Natural killer cell (primary cell): ENCODE measurements at regions of chr7 and their contacts with region 1.

Region 1: DNA sequence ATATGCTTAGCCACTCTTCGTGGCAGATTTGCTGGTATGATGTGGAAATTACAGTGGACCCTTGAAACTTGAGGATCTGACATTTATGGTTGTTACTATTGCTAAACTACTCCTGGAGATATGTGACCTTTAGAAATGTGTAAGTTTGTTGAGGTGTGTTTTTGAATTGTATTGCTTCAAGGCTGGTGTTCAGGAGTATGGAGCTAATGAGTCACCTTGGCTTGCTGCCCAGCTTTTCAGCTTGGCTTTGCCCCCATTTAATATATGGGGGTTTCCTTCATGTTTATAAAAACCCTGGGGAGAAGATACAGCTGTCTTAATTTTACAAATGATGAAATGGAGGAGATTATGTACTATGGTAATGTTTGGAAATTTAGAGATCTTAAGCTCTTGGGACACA is 11.6 kb downstream of the HBP1 start:
- DNase-seq: peak in 1 of 2 donors; percentile 66
- ATAC-seq: peak in 2 of 3 donors; percentile 19 to 60
- H3K4me3 ChIP-seq: no peak overlapping the region
- H3K4me3 Mint-ChIP-seq: peak overlapping the region; percentile 10
- H3K27ac ChIP-seq: no peak overlapping the region
- H3K27ac Mint-ChIP-seq: peak overlapping the region; percentile 52 to 78
- H3K4me1 ChIP-seq: peaks cover 7% of the 10 kb centered on the region
- H3K4me1 Mint-ChIP-seq: peaks cover 32 to 38% of the 10 kb centered on the region in 2 donors
- H3K27me3 ChIP-seq: no peaks in the 10 kb centered on the region
- H3K27me3 Mint-ChIP-seq: no peaks in the 10 kb centered on the region
- CTCF ChIP-seq: no peak

Region 2: DNA sequence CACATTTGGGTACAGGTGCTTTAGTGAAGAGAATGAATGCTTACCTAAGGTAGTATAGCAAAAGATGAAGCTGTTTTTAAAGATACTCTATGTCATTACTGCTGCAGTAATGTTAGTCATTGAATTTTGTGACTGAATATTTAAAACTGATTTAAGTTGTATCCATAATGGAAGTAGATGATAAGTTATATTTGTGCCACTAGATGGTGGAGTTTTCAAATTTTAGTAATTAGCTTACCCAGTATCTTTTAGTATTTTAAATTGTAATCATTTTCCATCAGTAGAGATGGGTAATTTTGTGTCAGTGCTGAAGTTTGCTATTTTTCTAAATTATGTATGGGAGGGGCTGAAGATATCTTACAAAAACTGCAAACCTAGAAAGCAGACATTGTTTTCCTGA is 13.7 kb after region 1 on chr7:
- intact Hi-C with region 1: loop called (anchors 1 kb)
- DNase-seq: no peak
- ATAC-seq: no peak
- H3K4me3 ChIP-seq: no peak overlapping the region
- H3K4me3 Mint-ChIP-seq: no peak overlapping the region
- H3K27ac ChIP-seq: no peak overlapping the region
- H3K27ac Mint-ChIP-seq: peak overlapping the region; percentile 4 to 44
- H3K4me1 ChIP-seq: no peaks in the 10 kb centered on the region
- H3K4me1 Mint-ChIP-seq: peaks cover 5 to 11% of the 10 kb centered on the region in 2 donors
- H3K27me3 ChIP-seq: no peaks in the 10 kb centered on the region
- H3K27me3 Mint-ChIP-seq: no peaks in the 10 kb centered on the region
- CTCF ChIP-seq: no peak

Region 3: DNA sequence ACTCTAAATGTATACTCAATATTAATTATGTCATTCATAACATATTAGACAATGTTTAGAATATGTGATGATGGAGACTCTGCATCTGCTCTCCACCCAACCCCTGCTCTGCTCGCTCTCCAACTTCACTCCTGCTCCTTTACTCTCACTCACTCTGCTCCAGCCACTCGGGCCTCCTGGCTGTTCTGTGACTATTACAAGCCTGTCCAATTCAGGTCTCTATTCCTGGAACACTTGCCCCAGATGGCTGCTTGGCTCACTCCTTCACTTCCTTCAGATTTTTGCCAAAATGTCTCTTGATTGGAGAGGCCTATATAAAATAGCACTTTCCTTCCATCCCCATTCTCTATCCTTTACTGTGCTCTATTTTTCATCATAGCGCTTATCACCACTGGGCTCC is 73.2 kb after region 1 on chr7:
- intact Hi-C with region 1: no loop called
- DNase-seq: no peak
- ATAC-seq: no peak
- H3K4me3 ChIP-seq: no peak overlapping the region
- H3K4me3 Mint-ChIP-seq: no peak overlapping the region
- H3K27ac ChIP-seq: no peak overlapping the region
- H3K27ac Mint-ChIP-seq: no peak overlapping the region
- H3K4me1 ChIP-seq: no peaks in the 10 kb centered on the region
- H3K4me1 Mint-ChIP-seq: peaks cover 0 to 5% of the 10 kb centered on the region in 2 donors
- H3K27me3 ChIP-seq: no peaks in the 10 kb centered on the region
- H3K27me3 Mint-ChIP-seq: no peaks in the 10 kb centered on the region
- CTCF ChIP-seq: no peak

Region 4: GRCh38 chr7:107372298-107372697 is 191.9 kb after region 1 on chr7:
- intact Hi-C with region 1: no loop called
- DNase-seq: no peak
- ATAC-seq: no peak
- H3K4me3 ChIP-seq: no peak overlapping the region
- H3K4me3 Mint-ChIP-seq: no peak overlapping the region
- H3K27ac ChIP-seq: no peak overlapping the region
- H3K27ac Mint-ChIP-seq: no peak overlapping the region
- H3K4me1 ChIP-seq: no peaks in the 10 kb centered on the region
- H3K4me1 Mint-ChIP-seq: no peaks in the 10 kb centered on the region
- H3K27me3 ChIP-seq: no peaks in the 10 kb centered on the region
- H3K27me3 Mint-ChIP-seq: no peaks in the 10 kb centered on the region
- CTCF ChIP-seq: no peak